HepG2 (cell line): ENCODE measurements at regions of chr9 and their contacts with region 1.

Region 1: GRCh38 chr9:113410207-113410864 is at the starts of genes C9orf43 and POLE3:
- DNase-seq: peak; percentile 91
- ATAC-seq: peak; percentile 97
- H3K4me3 ChIP-seq: peak within 1 kb of the TSS; percentile 91 to 98 (median 95)
- H3K27ac ChIP-seq: peak within 1 kb of the TSS; percentile 91
- H3K4me1 ChIP-seq: peaks cover 37% of the 10 kb centered on the region
- H3K27me3 ChIP-seq: no peaks in the 10 kb centered on the region; a peak in 1 of 5 replicates
- CTCF ChIP-seq: peak; percentile 42
- EP300 ChIP-seq: peak; percentile 34 to 42; a peak in 1 of 4 replicates
- POLR2A ChIP-seq: peak; percentile 79 to 81
- RAD21 ChIP-seq: 0 out of 2 replicates have a peak, but pooled peaks have one; percentile 13
- total RNA-seq, gene C9orf43: 0.18 and 0.31 TPM in 2 replicates
- total RNA-seq, gene POLE3: 77.2 and 93.1 TPM in 2 replicates

Region 2: DNA sequence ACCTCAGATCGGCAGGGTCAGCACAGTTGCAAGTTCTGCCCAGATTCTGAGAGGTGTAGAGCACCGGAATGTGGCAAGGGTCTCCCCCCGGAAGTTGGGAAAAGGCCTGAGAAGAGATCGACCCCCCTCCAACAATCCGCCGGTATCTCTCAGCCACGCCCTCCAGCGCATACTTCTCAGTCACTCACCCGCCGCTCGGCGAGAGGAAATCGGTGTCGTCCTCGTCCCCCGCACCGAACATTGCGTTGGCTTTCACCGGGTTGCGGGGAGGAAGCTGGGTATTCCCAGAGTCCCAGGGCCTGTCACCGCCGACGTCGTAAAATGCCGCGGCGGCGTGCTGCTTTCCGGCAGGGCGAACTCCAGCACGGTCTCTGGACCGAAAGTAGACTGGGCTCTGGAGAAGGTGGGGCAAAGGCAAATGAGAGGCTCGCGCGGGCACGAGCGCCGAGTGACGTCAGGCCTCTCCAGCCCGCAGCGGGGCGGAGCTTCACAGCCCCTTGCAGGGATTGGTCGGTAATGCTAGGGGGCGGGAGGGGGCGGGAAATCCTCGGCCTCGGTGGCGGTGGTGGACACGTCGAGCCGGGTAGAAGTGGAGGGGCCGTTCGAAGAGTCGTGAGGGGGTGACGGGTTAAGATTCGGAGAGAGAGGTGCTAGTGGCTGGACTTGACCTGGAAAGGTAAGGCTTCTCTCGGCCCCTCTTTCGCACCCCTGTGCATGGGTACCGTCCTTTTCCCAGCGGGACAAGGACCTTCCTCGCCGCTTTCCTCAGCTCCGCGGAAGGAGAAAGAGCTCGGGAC is 189.1 kb before region 1 on chr9 and contains the starts of genes FKBP15 and SLC31A1:
- CTCF ChIA-PET with region 1: no interaction called
- POLR2A ChIA-PET with region 1: interaction called, 10 read pairs
- in situ Hi-C with region 1: no loop called
- intact Hi-C with region 1: no loop called
- DNase-seq: peak; percentile 95
- ATAC-seq: peak; percentile 90
- H3K4me3 ChIP-seq: peak within 1 kb of the TSS; percentile 90 to 92 (median 91)
- H3K27ac ChIP-seq: peak within 1 kb of the TSS; percentile 86
- H3K4me1 ChIP-seq: peaks cover 53% of the 10 kb centered on the region
- H3K27me3 ChIP-seq: peaks cover 0 to 3% of the 10 kb centered on the region in 2 experiments; a peak in 1 of 5 replicates
- CTCF ChIP-seq: no peak
- EP300 ChIP-seq: peak in 1 of 2 experiments; percentile 32; a peak in 1 of 4 replicates
- POLR2A ChIP-seq: peak; percentile 91 to 93
- RAD21 ChIP-seq: no peak
- total RNA-seq, gene FKBP15: 11.8 and 12.3 TPM in 2 replicates
- total RNA-seq, gene SLC31A1: 45.9 and 70.0 TPM in 2 replicates

Region 3: GRCh38 chr9:113289091-113289490 is 121.2 kb before region 1 on chr9:
- CTCF ChIA-PET with region 1: no interaction called
- POLR2A ChIA-PET with region 1: no interaction called
- in situ Hi-C with region 1: no loop called
- intact Hi-C with region 1: no loop called
- DNase-seq: no peak
- ATAC-seq: no peak
- H3K4me3 ChIP-seq: no peak overlapping the region
- H3K27ac ChIP-seq: no peak overlapping the region
- H3K4me1 ChIP-seq: no peaks in the 10 kb centered on the region
- H3K27me3 ChIP-seq: no peaks in the 10 kb centered on the region
- CTCF ChIP-seq: no peak
- EP300 ChIP-seq: no peak
- POLR2A ChIP-seq: no peak
- RAD21 ChIP-seq: no peak

Region 4: GRCh38 chr9:113309204-113309813 is 101.0 kb before region 1 on chr9:
- CTCF ChIA-PET with region 1: interaction called, 8 read pairs
- POLR2A ChIA-PET with region 1: interaction called, 4 read pairs
- in situ Hi-C with region 1: no loop called
- intact Hi-C with region 1: loop called (anchors 1 kb)
- DNase-seq: peak; percentile 53
- ATAC-seq: peak; percentile 59; the same call in 2 of the 3 replicates
- H3K4me3 ChIP-seq: no peak overlapping the region
- H3K27ac ChIP-seq: no peak overlapping the region
- H3K4me1 ChIP-seq: peaks cover 10% of the 10 kb centered on the region
- H3K27me3 ChIP-seq: 0 out of 5 replicates have a peak, but pooled peaks cover 0 to 1% of the 10 kb centered on the region in 2 experiments
- CTCF ChIP-seq: peak; percentile 72
- EP300 ChIP-seq: no peak
- POLR2A ChIP-seq: no peak
- RAD21 ChIP-seq: peak; percentile 59

Region 5: DNA sequence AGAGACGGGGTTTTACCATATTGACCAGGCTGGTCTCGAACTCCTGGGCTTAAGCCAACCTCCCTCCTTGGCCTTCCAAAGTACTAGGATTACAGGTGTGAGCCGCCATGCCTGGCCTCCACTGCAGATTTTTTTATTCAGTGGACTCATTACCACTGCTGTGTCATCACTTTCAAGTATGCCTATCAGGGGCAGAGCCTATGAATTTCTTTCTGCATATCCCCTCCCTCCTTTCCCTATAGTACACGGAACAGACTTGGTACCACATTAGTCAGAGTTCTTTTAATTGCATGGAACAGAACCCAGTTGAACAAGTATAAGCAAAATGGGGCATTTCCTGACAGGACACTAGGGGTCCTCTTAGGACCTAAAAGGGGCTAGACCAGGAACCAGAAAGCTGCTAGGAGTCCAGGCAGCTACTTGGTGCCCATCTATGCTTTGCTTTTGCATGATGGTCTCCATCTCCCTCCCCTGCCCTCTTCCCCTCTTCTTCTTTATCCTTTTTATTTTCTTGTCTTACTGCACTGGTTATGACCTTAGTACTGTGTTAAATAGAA is 55.2 kb before region 1 on chr9:
- CTCF ChIA-PET with region 1: interaction called, 28 read pairs
- POLR2A ChIA-PET with region 1: interaction called, 7 read pairs
- in situ Hi-C with region 1: no loop called
- intact Hi-C with region 1: loop called (anchors 1 kb)
- DNase-seq: peak; percentile 77
- ATAC-seq: peak; percentile 88
- H3K4me3 ChIP-seq: no peak overlapping the region
- H3K27ac ChIP-seq: no peak overlapping the region
- H3K4me1 ChIP-seq: peaks cover 32% of the 10 kb centered on the region
- H3K27me3 ChIP-seq: peaks cover 0 to 14% of the 10 kb centered on the region in 2 experiments; a peak in 3 of 5 replicates
- CTCF ChIP-seq: peak; percentile 76
- EP300 ChIP-seq: no peak
- POLR2A ChIP-seq: no peak
- RAD21 ChIP-seq: peak; percentile 81

Region 6: DNA sequence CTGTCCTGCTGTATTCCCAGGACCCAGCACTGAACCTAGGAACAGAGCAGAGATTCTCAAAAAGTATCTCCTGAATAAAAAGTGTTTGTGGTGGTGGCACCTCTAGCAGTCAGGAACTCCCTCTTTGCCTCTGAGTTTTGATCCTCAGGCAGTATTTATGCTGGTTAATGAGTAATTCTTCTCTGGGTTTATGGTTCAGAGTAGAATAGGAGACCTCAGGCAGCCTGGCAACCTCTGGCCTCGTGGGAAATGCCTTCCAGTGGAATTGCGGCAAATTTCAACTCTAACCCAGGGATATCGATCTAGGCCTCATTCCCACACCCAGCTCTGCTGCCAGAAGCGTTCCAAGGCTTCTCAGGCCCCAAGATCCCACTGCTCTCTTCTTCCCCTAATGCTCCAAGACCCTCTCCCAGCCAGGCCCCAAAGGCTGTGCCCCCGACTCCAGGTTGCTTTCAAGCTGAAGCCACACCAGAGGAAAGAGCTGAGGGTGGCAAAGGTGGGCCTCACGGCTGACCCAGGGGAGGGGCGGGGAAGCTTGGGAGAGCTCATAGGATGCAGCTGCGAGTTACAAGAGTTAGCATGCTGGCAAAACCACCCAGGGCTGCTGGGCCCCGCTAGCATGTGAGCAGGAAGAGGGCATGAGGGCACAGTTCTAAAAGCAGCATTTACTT is 22.6 kb before region 1 on chr9:
- CTCF ChIA-PET with region 1: no interaction called
- POLR2A ChIA-PET with region 1: interaction called, 23 read pairs
- in situ Hi-C with region 1: no loop called
- intact Hi-C with region 1: no loop called
- DNase-seq: peak; percentile 91
- ATAC-seq: peak; percentile 95
- H3K4me3 ChIP-seq: peak overlapping the region; percentile 17 to 51 (median 35); a peak in 4 of 6 replicates
- H3K27ac ChIP-seq: peak overlapping the region; percentile 97
- H3K4me1 ChIP-seq: peaks cover 86% of the 10 kb centered on the region
- H3K27me3 ChIP-seq: no peaks in the 10 kb centered on the region
- CTCF ChIP-seq: 0 out of 2 replicates have a peak, but pooled peaks have one; percentile 18
- EP300 ChIP-seq: peak; percentile 41 to 83; a peak in 3 of 4 replicates
- POLR2A ChIP-seq: peak; percentile 63 to 65
- RAD21 ChIP-seq: 0 out of 2 replicates have a peak, but pooled peaks have one; percentile 29

Region 7: GRCh38 chr9:113578882-113579282 is 168.5 kb after region 1 on chr9:
- CTCF ChIA-PET with region 1: no interaction called
- POLR2A ChIA-PET with region 1: no interaction called
- in situ Hi-C with region 1: no loop called
- intact Hi-C with region 1: no loop called
- DNase-seq: no peak
- ATAC-seq: no peak
- H3K4me3 ChIP-seq: no peak overlapping the region
- H3K27ac ChIP-seq: no peak overlapping the region
- H3K4me1 ChIP-seq: peaks cover 33% of the 10 kb centered on the region
- H3K27me3 ChIP-seq: no peaks in the 10 kb centered on the region
- CTCF ChIP-seq: no peak
- EP300 ChIP-seq: no peak
- POLR2A ChIP-seq: no peak
- RAD21 ChIP-seq: no peak

Region 8: DNA sequence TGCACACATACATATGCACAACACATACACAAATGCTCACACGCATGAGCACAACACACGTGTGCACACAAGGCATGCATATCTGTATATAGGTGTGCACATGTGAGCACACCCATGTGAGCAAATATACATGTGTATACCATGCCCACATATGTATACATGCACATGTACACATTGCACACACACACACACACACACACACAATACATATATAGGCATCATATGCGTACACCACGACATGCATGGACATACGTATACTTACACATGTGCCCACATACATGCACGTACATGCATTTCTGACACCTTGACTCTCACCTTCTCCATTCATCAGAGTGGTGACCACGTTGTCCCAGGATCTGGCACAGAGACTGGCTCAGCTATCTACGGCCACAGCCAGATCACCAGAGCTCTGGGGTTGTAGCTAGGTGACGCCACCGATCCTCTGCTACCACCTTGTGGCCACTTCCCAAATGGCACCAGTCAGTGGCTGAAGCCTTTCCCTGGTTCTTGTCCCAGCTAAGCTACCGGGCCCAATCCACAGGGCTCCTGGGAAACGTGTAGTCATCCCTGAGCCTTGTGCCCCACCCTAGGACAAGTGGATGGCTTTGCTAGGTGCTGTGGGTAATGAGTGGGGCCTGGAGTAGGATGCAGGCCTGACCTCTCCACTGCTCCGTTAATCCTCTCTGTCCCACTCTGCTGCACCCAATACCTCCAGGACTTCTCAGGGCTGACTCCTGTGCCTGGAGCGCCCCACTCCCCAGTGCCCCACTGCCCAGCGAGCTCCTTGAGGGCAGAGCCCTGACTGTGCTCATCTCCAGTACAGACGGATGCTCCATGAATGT is 247.6 kb after region 1 on chr9:
- CTCF ChIA-PET with region 1: no interaction called
- POLR2A ChIA-PET with region 1: interaction called, 5 read pairs
- in situ Hi-C with region 1: no loop called
- intact Hi-C with region 1: loop called (anchors 10 kb)
- DNase-seq: peak; percentile 73
- ATAC-seq: peak; percentile 92
- H3K4me3 ChIP-seq: no peak overlapping the region
- H3K27ac ChIP-seq: no peak overlapping the region
- H3K4me1 ChIP-seq: peaks cover 65% of the 10 kb centered on the region
- H3K27me3 ChIP-seq: peaks cover 0 to 19% of the 10 kb centered on the region in 2 experiments; a peak in 2 of 5 replicates
- CTCF ChIP-seq: peak; percentile 99
- EP300 ChIP-seq: no peak
- POLR2A ChIP-seq: no peak
- RAD21 ChIP-seq: peak; percentile 99